ENCODE measurements at regions of chr6 and their contacts with region 1.

Region 1: DNA sequence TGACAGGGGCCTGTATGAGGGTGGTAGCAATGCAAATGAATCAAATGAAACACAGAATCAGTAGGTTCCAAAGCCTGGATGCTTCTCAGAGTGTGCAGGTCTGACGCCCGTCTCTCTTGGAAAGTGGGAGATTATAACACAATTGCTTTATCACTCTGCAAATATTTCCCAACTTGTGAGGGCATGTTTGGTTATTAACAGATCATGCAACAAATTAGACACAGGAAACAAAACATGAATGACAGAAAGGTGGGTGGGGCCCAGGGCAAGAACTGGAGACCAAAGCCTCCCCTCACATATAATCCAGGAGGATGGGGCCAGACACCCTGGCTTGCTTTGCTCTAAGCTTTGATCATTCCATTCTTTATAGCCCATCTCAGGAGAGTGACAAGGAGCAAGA is 108.6 kb upstream of the MRPS10 start:
- DNase-seq: no peak
- ATAC-seq: no peak
- H3K4me3 Mint-ChIP-seq: no peak overlapping the region
- H3K27ac Mint-ChIP-seq: no peak overlapping the region
- H3K4me1 Mint-ChIP-seq: peaks cover 31% of the 10 kb centered on the region
- H3K27me3 Mint-ChIP-seq: no peaks in the 10 kb centered on the region
- CTCF ChIP-seq: no peak

Region 2: DNA sequence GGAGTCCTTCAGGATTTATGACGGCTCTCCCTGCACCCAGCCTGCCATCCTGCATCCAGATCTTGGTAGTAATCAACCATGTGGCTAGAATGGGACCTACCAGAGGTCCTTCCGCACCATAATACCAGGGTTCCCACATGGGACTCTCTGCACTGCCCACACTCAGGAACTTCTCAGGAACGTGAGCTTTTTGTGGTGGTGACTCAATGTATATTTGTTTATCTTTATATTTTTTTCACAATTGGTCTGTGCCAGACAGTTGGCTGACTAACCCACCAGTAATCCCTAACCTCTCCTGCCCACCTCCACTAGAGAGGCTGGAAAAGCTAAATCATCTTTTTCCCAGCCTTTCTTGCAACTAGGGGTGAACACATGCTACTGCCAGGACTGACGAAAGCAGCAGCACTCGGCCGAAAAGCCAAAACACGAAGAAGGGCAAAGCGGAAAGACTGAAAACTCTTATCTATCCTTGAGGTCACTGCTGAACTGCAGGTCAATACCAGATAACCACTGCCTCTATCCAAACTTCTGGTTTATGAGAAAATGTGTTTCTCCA is 12.5 kb after region 1 on chr6:
- CTCF ChIA-PET with region 1: interaction called, 3 read pairs
- POLR2A ChIA-PET with region 1: interaction called, 20 read pairs
- intact Hi-C with region 1: no loop called
- DNase-seq: no peak
- ATAC-seq: no peak
- H3K4me3 Mint-ChIP-seq: no peak overlapping the region
- H3K27ac Mint-ChIP-seq: peak overlapping the region; percentile 82
- H3K4me1 Mint-ChIP-seq: peaks cover 59% of the 10 kb centered on the region
- H3K27me3 Mint-ChIP-seq: no peaks in the 10 kb centered on the region
- CTCF ChIP-seq: no peak

Measured in activated CD8-positive, alpha-beta T cell treated with anti-CD3 and anti-CD28 coated beads for 36 hours (primary cell).